Mammary epithelial cell (primary cell): ENCODE measurements at regions of chr12 and their contacts with region 1.

Region 1: GRCh38 chr12:52032804-52033502 is 18.3 kb upstream of the NR4A1 start:
- DNase-seq: peak; percentile 93
- H3K4me3 ChIP-seq: peak overlapping the region; percentile 27 to 44 (median 35)
- H3K27ac ChIP-seq: peak overlapping the region; percentile 64
- H3K4me1 ChIP-seq: peaks cover 22% of the 10 kb centered on the region
- H3K27me3 ChIP-seq: no peaks in the 10 kb centered on the region
- CTCF ChIP-seq: no peak

Region 2: DNA sequence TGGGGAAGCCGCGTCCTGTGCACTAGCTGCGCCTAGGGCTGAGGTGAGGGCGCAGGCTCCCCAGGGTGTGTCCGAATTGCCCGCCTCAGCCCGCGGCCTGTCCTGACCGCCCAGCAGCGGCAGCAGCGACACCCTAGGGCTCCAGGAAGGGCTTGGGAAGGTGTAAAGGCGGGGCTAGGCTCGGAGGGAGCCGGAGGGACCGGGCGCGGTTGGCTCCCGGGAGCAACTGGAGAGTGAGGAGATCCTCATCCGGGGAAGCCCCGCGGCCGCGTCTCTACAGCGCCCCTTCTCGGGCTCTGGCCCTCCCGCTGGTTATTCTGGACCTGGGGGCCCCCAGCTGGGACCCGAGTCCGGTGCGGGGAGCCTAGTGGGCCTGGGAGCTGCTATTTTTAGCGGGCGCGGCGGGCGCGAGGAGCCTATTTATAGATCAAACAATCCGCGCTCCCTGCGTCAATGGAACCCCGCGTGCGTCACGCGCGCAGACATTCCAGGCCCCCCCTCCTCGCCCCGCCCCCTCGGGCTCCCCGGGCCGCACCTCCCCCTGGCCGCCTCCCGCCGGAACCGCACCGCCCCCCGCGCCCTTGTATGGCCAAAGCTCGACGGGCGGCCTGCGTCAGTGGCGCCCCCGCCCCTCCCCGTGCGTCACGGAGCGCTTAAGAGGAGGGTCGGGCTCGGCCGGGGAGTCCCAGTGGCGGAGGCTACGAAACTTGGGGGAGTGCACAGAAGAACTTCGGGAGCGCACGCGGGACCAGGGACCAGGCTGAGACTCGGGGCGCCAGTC is 18.0 kb after region 1 on chr12 and contains the start of gene NR4A1:
- CTCF ChIA-PET with region 1: no interaction called
- dilution Hi-C with region 1: no loop called
- in situ Hi-C with region 1: no loop called
- intact Hi-C with region 1: loop called (anchors 2 kb)
- DNase-seq: peak; percentile 86
- H3K4me3 ChIP-seq: peak within 1 kb of the TSS; percentile 51 to 63 (median 59)
- H3K27ac ChIP-seq: peak within 1 kb of the TSS; percentile 51
- H3K4me1 ChIP-seq: peaks cover 24% of the 10 kb centered on the region
- H3K27me3 ChIP-seq: no peaks in the 10 kb centered on the region
- CTCF ChIP-seq: peak in 1 of 2 donors; percentile 1
- total RNA-seq, gene NR4A1: 0.17 to 2.4 TPM

Region 3: GRCh38 chr12:52069327-52070184 is 36.6 kb after region 1 on chr12 and contains the start of gene ATG101:
- CTCF ChIA-PET with region 1: interaction called, 4 read pairs
- dilution Hi-C with region 1: no loop called
- in situ Hi-C with region 1: no loop called
- intact Hi-C with region 1: loop called (anchors 1 kb)
- DNase-seq: peak; percentile 92
- H3K4me3 ChIP-seq: peak within 1 kb of the TSS; percentile 94 to 99 (median 98)
- H3K27ac ChIP-seq: peak within 1 kb of the TSS; percentile 97
- H3K4me1 ChIP-seq: peaks cover 20% of the 10 kb centered on the region
- H3K27me3 ChIP-seq: no peaks in the 10 kb centered on the region
- CTCF ChIP-seq: peak; percentile 61 to 87
- total RNA-seq, gene ATG101: 44.8 to 59.4 TPM

Region 4: DNA sequence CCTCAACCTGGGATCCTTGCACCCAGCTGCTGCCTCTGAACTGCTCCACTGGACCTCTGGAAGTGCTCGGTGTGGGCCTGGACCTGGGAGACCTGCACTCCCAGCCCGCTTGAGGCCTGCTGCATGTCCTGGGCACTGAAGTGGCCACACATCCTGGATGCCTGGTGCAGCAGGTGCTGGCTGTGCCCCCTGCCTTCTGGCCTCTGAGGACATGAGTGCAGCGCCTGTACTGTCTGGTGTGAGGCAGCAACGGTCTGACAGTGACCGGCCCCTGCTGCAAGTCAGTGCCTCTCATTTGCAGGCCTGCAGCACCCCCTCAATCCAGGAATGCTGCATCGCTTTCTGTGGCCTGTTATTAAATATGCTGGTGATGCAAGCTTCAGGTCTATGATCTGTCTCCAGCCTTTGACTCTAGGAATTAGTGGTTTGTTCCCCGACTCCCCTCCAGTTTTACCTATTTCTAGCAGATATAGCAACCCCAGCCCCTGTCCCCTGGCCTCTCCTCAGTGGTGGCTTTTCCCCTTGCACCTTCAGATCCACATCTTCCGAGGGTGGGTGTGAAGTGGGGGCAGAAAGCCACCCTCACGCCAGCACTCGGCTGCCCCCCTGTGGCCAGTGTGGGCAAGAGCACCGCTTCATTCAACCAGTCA is 50.2 kb after region 1 on chr12:
- CTCF ChIA-PET with region 1: no interaction called
- dilution Hi-C with region 1: no loop called
- in situ Hi-C with region 1: loop called (anchors 5 kb)
- intact Hi-C with region 1: no loop called
- DNase-seq: no peak
- H3K4me3 ChIP-seq: no peak overlapping the region
- H3K27ac ChIP-seq: no peak overlapping the region
- H3K4me1 ChIP-seq: peaks cover 5% of the 10 kb centered on the region
- H3K27me3 ChIP-seq: no peaks in the 10 kb centered on the region
- CTCF ChIP-seq: peak; percentile 98 to 99

Region 5: DNA sequence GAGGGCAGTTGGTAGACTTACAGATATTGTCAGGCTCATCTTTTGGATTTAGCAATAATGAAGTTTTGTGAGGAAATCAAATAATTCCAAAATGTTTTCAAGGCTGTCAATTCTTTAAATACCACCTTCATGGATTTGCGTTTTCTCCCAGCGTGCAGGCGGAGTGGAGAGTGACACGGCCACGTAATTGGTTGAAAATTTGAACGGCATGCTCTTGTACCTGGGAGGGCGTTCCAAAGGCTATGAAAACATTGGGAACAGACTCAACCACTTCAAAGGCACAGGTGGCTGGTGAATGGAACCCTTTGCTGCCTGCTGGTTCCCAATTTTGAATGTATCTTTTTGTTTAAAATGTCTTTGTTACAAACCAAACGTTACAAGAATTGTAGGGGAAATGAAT is 58.9 kb after region 1 on chr12:
- CTCF ChIA-PET with region 1: no interaction called
- dilution Hi-C with region 1: loop called (anchors 5 kb)
- in situ Hi-C with region 1: no loop called
- intact Hi-C with region 1: no loop called
- DNase-seq: no peak
- H3K4me3 ChIP-seq: no peak overlapping the region
- H3K27ac ChIP-seq: no peak overlapping the region
- H3K4me1 ChIP-seq: no peaks in the 10 kb centered on the region
- H3K27me3 ChIP-seq: peaks cover 4% of the 10 kb centered on the region
- CTCF ChIP-seq: no peak

Region 6: DNA sequence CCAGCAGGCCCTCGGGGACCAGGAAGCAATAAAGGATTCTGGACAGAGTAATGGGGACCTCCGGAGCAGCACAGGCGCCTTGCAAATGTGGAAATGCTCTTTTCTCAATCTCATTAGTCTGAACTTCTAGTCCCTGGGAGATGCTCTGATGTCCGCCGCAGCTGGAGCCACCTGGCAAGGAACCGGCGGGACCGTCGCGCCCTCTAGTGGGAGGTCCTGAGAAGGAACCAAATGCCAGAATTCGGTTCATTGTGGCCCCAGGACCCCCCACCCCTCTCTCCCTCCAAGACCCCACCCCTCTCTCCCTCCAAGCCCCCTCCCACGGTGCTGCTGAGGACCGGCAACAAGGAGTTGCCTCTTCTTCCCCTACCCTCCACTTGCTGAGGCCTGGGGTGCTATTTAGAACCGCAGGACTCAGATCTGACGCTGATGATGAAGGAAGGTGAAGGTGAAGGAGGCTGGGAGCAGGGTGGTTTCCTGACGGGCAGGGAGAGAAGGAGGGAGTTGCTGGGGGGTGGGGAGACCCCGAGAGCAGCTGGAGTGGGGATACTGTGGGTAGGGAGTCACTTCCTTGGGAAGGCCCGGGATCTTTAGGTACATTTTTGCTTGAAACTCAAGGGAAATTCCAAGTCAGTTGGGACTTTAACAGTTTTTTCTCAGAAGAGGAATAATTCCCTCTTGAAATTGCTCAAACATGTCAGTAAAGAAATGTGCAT is 89.0 kb after region 1 on chr12:
- CTCF ChIA-PET with region 1: no interaction called
- dilution Hi-C with region 1: no loop called
- in situ Hi-C with region 1: loop called (anchors 5 kb)
- intact Hi-C with region 1: no loop called
- DNase-seq: no peak
- H3K4me3 ChIP-seq: no peak overlapping the region
- H3K27ac ChIP-seq: no peak overlapping the region
- H3K4me1 ChIP-seq: peaks cover 5% of the 10 kb centered on the region
- H3K27me3 ChIP-seq: no peaks in the 10 kb centered on the region
- CTCF ChIP-seq: peak; percentile 69 to 82

Region 7: GRCh38 chr12:52221912-52222457 is 189.0 kb after region 1 on chr12:
- CTCF ChIA-PET with region 1: no interaction called
- dilution Hi-C with region 1: loop called (anchors 5 kb)
- in situ Hi-C with region 1: no loop called
- intact Hi-C with region 1: no loop called
- DNase-seq: peak; percentile 93
- H3K4me3 ChIP-seq: no peak overlapping the region
- H3K27ac ChIP-seq: peak overlapping the region; percentile 33
- H3K4me1 ChIP-seq: peaks cover 48% of the 10 kb centered on the region
- H3K27me3 ChIP-seq: no peaks in the 10 kb centered on the region
- CTCF ChIP-seq: peak; percentile 82 to 85